ENCODE measurements at regions of chr7 and their contacts with region 1.

Region 1: DNA sequence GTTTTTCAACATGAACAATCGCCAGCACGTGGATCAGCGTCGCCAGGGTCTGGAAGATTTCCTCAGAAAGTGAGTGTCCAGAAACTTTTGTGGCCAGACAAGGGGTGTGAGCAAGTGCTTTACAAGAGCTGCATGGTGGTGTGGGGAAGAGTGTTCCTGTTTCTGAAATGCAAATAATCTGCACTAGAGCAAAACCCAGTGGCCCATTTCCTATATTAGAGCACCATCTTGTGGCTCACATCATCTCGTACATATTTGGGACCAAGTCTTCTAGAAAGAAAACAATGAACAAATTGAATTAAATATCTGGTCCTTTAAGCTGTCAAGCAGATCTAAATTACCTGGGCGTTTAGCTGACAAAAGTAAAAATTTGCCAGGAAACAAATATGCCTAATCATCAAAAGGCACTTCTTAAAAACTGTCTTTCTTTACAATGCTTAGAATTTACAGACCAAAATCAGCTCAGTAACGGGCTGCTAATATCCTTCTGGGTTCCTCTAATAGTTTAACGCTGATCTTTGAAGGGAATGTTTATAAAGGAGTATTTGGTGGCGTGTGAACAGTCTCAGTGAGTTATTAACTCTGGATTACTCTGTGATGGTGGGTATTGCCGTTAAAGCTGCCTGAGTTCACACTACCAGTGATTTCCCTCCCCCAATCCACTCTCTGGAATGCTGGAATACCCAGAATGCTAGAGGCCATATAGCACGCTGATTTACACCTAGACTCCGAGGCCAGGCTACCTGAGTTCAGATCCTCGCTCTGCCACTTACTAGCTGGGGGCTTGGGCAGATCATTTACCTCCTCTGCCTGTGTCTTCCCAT is 73.6 kb downstream of the SNX10 start:
- DNase-seq: peak; percentile 76
- ATAC-seq: peak; percentile 74
- H3K4me3 ChIP-seq: no peak overlapping the region
- H3K27ac ChIP-seq: no peak overlapping the region
- H3K4me1 ChIP-seq: peaks cover 9% of the 10 kb centered on the region
- H3K27me3 ChIP-seq: no peaks in the 10 kb centered on the region
- CTCF ChIP-seq: peak; percentile 86

Region 2: GRCh38 chr7:25894902-25895791 is 470.1 kb before region 1 on chr7:
- CTCF ChIA-PET with region 1: interaction called, 17 read pairs
- POLR2A ChIA-PET with region 1: no interaction called
- intact Hi-C with region 1: loop called (anchors 1 kb)
- DNase-seq: peak; percentile 52
- ATAC-seq: peak; percentile 47
- H3K4me3 ChIP-seq: peak overlapping the region; percentile 12; the same call in 1 of the 2 replicates
- H3K27ac ChIP-seq: no peak overlapping the region
- H3K4me1 ChIP-seq: peaks cover 5% of the 10 kb centered on the region; the same call in 1 of the 2 replicates
- H3K27me3 ChIP-seq: no peaks in the 10 kb centered on the region
- CTCF ChIP-seq: peak; percentile 74

Region 3: GRCh38 chr7:26200444-26201246 is 164.6 kb before region 1 on chr7 and contains the start of gene HNRNPA2B1:
- CTCF ChIA-PET with region 1: no interaction called
- POLR2A ChIA-PET with region 1: no interaction called
- intact Hi-C with region 1: loop called (anchors 2 kb)
- DNase-seq: peak; percentile 98
- ATAC-seq: peak; percentile 80
- H3K4me3 ChIP-seq: peak within 1 kb of the TSS; percentile 99
- H3K27ac ChIP-seq: peak within 1 kb of the TSS; percentile 95
- H3K4me1 ChIP-seq: peaks cover 35% of the 10 kb centered on the region
- H3K27me3 ChIP-seq: no peaks in the 10 kb centered on the region
- CTCF ChIP-seq: no peak
- total RNA-seq, gene HNRNPA2B1: 304 and 457 TPM in 2 replicates

Region 4: GRCh38 chr7:26398756-26399501 is 33.6 kb after region 1 on chr7:
- CTCF ChIA-PET with region 1: interaction called, 16 read pairs
- POLR2A ChIA-PET with region 1: no interaction called
- intact Hi-C with region 1: loop called (anchors 2 kb)
- DNase-seq: peak; percentile 53
- ATAC-seq: peak; percentile 79
- H3K4me3 ChIP-seq: peak overlapping the region; percentile 75
- H3K27ac ChIP-seq: peak overlapping the region; percentile 20; the same call in 1 of the 2 replicates
- H3K4me1 ChIP-seq: peaks cover 11% of the 10 kb centered on the region
- H3K27me3 ChIP-seq: no peaks in the 10 kb centered on the region
- CTCF ChIP-seq: peak; percentile 43; the same call in 1 of the 2 replicates

Region 5: DNA sequence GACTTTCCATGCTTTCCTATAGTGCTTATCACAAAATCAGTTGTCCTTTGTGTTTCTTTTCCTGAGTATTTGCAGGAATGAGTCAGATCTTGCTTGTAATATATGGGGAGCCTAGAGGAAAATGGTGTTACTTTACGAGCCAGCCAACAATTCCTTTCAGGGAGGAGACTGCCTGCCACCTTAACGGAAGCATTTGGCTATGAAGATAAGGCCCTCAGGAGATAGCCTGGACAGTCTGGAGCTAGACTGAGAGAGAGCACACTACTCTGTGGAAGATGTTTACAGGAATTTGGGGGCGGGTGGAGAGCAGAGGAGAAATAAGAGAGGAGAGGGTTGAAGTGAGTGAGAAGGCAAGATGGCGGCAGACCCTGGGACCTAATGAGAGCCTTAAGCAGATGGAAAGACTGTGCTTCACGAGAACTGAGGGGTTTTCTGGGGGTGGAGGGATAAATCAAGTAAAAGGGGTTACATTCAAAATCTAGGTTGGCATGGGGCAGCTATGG is 52.7 kb after region 1 on chr7:
- CTCF ChIA-PET with region 1: no interaction called
- POLR2A ChIA-PET with region 1: no interaction called
- intact Hi-C with region 1: no loop called
- DNase-seq: peak; percentile 53
- ATAC-seq: peak; percentile 92
- H3K4me3 ChIP-seq: no peak overlapping the region
- H3K27ac ChIP-seq: no peak overlapping the region
- H3K4me1 ChIP-seq: peaks cover 8% of the 10 kb centered on the region
- H3K27me3 ChIP-seq: no peaks in the 10 kb centered on the region
- CTCF ChIP-seq: no peak

Region 6: DNA sequence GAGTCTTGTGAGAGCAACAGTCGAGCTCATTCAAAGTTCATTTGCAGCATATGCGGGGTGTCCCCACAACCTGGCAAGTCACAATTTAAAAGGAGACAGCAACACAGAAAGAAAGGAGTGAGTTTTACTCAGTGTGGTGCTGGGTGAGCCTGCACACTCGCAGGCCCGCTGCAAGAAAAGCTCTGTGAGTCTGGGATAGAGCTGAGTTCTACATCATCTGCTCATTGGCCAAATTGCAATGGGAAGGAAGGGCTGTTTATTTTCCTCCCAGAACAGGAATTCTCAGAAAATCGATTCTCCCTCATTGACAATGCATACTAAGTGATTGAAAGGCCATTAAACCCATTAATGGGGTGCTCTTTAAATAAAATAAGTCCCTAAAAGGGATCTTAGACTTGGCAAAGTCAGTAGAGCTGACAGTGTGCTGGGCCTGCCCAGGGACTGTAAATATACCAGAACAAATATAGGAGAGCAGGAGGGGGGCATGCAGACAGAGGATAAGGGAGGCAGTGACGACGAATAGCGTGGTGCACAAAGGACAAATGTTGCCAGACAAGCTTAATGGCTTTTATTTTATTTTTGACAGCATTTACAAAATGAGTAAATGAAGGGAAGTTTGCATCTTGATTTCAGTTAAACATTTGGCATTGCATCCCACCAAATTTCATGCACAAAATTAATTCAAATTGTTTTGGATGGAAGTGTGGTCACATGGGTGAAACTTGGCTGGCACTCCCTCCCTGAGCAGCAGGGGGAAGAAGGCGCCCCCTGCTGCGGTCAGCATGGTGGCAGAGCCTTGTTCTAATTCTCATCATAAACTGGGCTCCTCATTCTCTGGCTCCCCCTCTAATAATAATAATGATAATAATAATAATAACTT is 142.1 kb after region 1 on chr7:
- CTCF ChIA-PET with region 1: interaction called, 17 read pairs
- POLR2A ChIA-PET with region 1: no interaction called
- intact Hi-C with region 1: no loop called
- DNase-seq: no peak
- ATAC-seq: no peak
- H3K4me3 ChIP-seq: no peak overlapping the region
- H3K27ac ChIP-seq: no peak overlapping the region
- H3K4me1 ChIP-seq: peaks cover 11% of the 10 kb centered on the region; the same call in 1 of the 2 replicates
- H3K27me3 ChIP-seq: no peaks in the 10 kb centered on the region
- CTCF ChIP-seq: peak; percentile 30; the same call in 1 of the 2 replicates

Region 7: DNA sequence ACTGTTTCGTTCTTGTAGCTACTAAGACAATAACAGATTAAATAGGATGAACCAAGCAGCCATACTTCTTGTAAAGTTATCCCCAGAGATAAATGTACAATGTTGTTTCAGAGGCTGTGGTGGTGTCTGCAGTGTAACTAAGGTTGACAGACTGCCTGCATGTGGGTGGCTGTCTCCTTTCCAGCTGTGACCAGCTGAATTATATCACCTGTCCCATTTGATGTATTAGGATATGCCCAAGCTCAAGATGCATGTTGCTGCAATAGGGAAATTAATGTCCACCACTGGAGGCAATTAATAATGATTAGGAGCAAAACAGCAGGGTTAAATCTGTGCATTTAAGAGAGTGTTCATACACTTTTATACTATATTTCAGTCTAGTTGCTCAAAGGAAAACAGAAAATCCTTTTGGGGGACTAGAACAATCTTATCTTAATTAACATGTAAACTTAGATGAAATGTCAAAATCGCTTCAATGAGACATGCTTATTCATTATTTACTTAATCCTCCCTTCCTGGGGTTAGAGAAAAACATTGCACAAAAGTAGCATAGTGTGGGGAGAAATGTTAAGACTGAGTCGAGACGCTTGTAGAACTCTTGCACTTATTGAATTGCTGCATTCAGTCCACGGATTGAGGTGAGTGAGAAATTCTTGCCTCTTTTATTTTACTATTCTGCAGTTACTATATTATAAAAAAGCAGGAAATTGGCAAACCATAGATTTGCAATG is 195.4 kb after region 1 on chr7:
- CTCF ChIA-PET with region 1: no interaction called
- POLR2A ChIA-PET with region 1: no interaction called
- intact Hi-C with region 1: no loop called
- DNase-seq: peak; percentile 71
- ATAC-seq: peak; percentile 94
- H3K4me3 ChIP-seq: peak overlapping the region; percentile 48
- H3K27ac ChIP-seq: peak overlapping the region; percentile 73
- H3K4me1 ChIP-seq: peaks cover 24% of the 10 kb centered on the region
- H3K27me3 ChIP-seq: no peaks in the 10 kb centered on the region
- CTCF ChIP-seq: no peak

Region 8: GRCh38 chr7:26667500-26668133 is 302.3 kb after region 1 on chr7:
- CTCF ChIA-PET with region 1: interaction called, 83 read pairs
- POLR2A ChIA-PET with region 1: no interaction called
- intact Hi-C with region 1: loop called (anchors 1 kb)
- DNase-seq: peak; percentile 94
- ATAC-seq: peak; percentile 93
- H3K4me3 ChIP-seq: no peak overlapping the region
- H3K27ac ChIP-seq: no peak overlapping the region
- H3K4me1 ChIP-seq: peaks cover 24% of the 10 kb centered on the region
- H3K27me3 ChIP-seq: no peaks in the 10 kb centered on the region
- CTCF ChIP-seq: peak; percentile 97

Region 9: DNA sequence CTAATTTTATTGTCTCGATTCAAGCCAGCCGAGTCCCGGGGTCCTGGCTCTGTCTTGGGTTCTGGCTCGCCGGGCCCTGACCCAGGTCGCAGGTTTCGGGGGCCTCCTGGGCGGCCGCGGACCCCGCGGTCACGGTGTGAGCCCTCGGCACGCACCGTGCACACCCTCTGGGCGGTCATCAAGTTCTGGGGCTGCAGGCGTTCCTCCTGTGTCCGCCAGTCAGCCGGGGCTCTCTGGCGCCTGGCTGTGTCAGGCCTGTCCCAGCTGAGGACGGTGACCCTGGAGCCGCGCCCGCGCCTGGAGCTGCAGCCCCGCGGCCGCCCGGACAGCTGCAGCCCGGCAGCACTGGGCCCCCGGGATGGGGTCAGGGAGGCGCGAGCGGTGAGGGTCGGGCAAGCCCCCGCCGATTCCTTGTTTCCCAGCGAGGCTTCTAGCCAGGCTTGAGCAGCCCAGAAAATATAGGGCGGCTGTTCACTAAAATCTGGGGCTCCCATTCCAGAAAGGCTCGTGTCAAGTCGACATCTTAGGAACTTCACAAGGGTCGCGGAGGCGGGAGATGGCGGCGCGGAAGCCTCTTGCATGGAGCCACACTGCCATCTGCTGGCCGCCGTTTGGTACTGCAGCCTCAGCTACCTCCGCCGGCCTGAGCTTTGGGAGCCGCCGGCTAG is 795.4 kb after region 1 on chr7:
- CTCF ChIA-PET with region 1: interaction called, 26 read pairs
- POLR2A ChIA-PET with region 1: no interaction called
- intact Hi-C with region 1: loop called (anchors 1 kb)
- DNase-seq: peak; percentile 87
- ATAC-seq: peak; percentile 19
- H3K4me3 ChIP-seq: peak overlapping the region; percentile 84
- H3K27ac ChIP-seq: peak overlapping the region; percentile 97
- H3K4me1 ChIP-seq: peaks cover 15% of the 10 kb centered on the region
- H3K27me3 ChIP-seq: no peaks in the 10 kb centered on the region
- CTCF ChIP-seq: peak; percentile 96

Measured in PC-3 (cell line).